H1 (cell line): ENCODE measurements at regions of chr1 and their contacts with region 1.

Region 1: GRCh38 chr1:244289976-244290375 is 161.7 kb downstream of the ADSS2 start:
- DNase-seq: no peak
- H3K4me3 ChIP-seq: no peak overlapping the region
- H3K27ac ChIP-seq: no peak overlapping the region
- H3K4me1 ChIP-seq: no peaks in the 10 kb centered on the region
- H3K27me3 ChIP-seq: peaks cover 0 to 2% (median 0%) of the 10 kb centered on the region in 4 experiments; a peak in 1 of 7 replicates
- CTCF ChIP-seq: no peak
- EP300 ChIP-seq: no peak
- POLR2A ChIP-seq: no peak
- RAD21 ChIP-seq: no peak

Region 2: GRCh38 chr1:244302889-244303613 is 13.1 kb after region 1 on chr1:
- CTCF ChIA-PET with region 1: interaction called, 21 read pairs
- POLR2A ChIA-PET with region 1: interaction called, 3 read pairs
- DNase-seq: no peak
- H3K4me3 ChIP-seq: no peak overlapping the region
- H3K27ac ChIP-seq: no peak overlapping the region
- H3K4me1 ChIP-seq: peaks cover 0 to 4% (median 2%) of the 10 kb centered on the region in 4 experiments; a peak in 4 of 7 replicates
- H3K27me3 ChIP-seq: no peaks in the 10 kb centered on the region
- CTCF ChIP-seq: no peak
- EP300 ChIP-seq: no peak
- POLR2A ChIP-seq: no peak
- RAD21 ChIP-seq: no peak